B cell (primary cell): ENCODE measurements at regions of chr19 and their contacts with region 1.

Region 1: GRCh38 chr19:14015524-14016035 is 9.5 kb upstream of the RFX1 start:
- DNase-seq: peak; percentile 78
- ATAC-seq: peak; percentile 76
- H3K4me3 ChIP-seq: peak overlapping the region in 3 of 5 experiments; percentile 20 to 58 (median 29)
- H3K4me3 Mint-ChIP-seq: peak overlapping the region; percentile 82
- H3K27ac ChIP-seq: peak overlapping the region; percentile 7 to 56
- H3K27ac Mint-ChIP-seq: peak overlapping the region; percentile 88
- H3K4me1 ChIP-seq: peaks cover 28 to 57% of the 10 kb centered on the region in 2 donors
- H3K4me1 Mint-ChIP-seq: peaks cover 37% of the 10 kb centered on the region
- H3K27me3 ChIP-seq: no peaks in the 10 kb centered on the region
- H3K27me3 Mint-ChIP-seq: no peaks in the 10 kb centered on the region
- CTCF ChIP-seq: no peak

Region 2: DNA sequence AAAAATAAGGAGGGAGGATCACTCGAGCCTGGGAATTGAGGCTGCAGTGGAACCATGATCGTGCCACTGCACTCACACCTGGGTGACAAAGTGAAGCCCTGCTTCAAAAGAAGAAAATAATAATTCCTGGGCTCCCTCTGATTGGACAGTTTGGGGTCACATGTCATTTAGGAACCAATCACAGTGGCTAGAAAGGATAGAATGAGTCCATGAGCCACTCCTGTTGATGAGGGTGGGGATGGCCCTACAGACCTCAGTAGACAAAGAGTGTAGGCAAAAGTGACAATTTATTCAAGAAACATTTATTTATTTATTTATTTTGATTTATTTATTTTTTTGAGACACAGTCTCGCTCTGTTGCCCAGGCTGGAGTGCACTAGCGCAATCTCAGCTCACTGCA is 338.9 kb after region 1 on chr19:
- CTCF ChIA-PET with region 1: no interaction called
- POLR2A ChIA-PET with region 1: interaction called, 10 read pairs
- intact Hi-C with region 1: no loop called
- DNase-seq: no peak
- ATAC-seq: no peak
- H3K4me3 ChIP-seq: no peak overlapping the region
- H3K4me3 Mint-ChIP-seq: no peak overlapping the region
- H3K27ac ChIP-seq: no peak overlapping the region
- H3K27ac Mint-ChIP-seq: no peak overlapping the region
- H3K4me1 ChIP-seq: peaks cover 29 to 43% of the 10 kb centered on the region in 2 donors
- H3K4me1 Mint-ChIP-seq: peaks cover 24% of the 10 kb centered on the region
- H3K27me3 ChIP-seq: no peaks in the 10 kb centered on the region
- H3K27me3 Mint-ChIP-seq: no peaks in the 10 kb centered on the region
- CTCF ChIP-seq: no peak